Endothelial cell of umbilical vein (primary cell): ENCODE measurements at regions of chr21 and their contacts with region 1.

Region 1: GRCh38 chr21:42009831-42010523 is at the start of gene ZBTB21:
- DNase-seq: peak; percentile 98
- H3K4me3 ChIP-seq: peak within 1 kb of the TSS; percentile 47 to 70 (median 55)
- H3K27ac ChIP-seq: peak within 1 kb of the TSS; percentile 70
- H3K4me1 ChIP-seq: peaks cover 15% of the 10 kb centered on the region
- H3K27me3 ChIP-seq: peaks cover 3 to 14% of the 10 kb centered on the region in 2 experiments
- CTCF ChIP-seq: no peak
- POLR2A ChIP-seq: peak; percentile 80
- total RNA-seq, gene ZBTB21: 10.8 and 12.4 TPM in 2 replicates

Region 2: DNA sequence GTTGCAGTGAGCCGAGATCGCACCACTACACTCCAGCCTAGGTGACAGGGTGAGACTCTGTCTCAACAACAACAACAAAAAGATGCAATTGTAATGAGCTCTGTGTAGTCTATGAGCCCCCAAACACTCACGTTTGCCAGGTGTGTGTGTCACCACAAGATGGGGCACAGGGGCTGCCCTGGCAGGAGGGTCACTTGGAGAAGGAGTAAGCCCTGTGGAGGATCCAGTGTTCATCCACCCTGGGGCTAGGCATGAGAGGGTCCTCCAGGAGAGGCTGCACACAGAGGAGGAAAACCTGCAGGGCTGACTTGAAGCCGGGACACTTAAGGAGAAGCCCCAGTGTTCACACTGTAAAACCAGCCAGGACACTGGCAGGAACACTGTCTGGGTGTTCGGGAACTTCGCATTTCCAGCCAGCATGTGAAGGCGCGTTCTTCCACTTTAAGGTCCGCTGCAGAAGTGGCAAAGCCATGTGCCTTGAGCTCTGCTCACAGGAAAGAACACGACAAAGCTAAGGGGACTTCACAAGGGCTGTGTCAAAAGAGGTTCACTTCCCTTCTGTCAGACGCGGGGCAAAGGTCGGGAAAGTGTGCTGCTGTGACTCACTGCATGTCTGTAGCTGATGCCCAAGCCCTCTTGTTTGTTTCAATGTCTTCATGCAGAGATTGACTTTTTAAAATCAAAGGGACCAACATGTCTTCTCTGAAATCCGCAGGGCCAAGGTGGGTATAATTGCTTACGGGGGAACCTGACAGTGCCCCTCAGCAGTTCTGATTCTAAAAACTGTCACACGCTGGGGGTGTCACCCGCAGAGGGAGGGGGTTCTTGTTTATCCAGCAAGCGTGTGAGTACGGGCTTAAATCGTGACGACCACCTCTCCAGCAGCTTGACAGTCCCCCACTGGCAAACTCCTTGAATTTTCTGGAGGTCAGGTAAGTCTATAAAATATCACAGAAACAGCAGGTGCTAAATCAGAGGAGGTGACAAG is 345.9 kb before region 1 on chr21:
- CTCF ChIA-PET with region 1: no interaction called
- POLR2A ChIA-PET with region 1: no interaction called
- dilution Hi-C with region 1: no loop called
- intact Hi-C with region 1: no loop called
- DNase-seq: peak; percentile 6
- H3K4me3 ChIP-seq: no peak overlapping the region
- H3K27ac ChIP-seq: no peak overlapping the region
- H3K4me1 ChIP-seq: no peaks in the 10 kb centered on the region
- H3K27me3 ChIP-seq: peaks cover 0 to 2% of the 10 kb centered on the region in 2 experiments
- CTCF ChIP-seq: no peak
- POLR2A ChIP-seq: no peak

Region 3: GRCh38 chr21:41715649-41716281 is 294.2 kb before region 1 on chr21:
- CTCF ChIA-PET with region 1: no interaction called
- POLR2A ChIA-PET with region 1: no interaction called
- dilution Hi-C with region 1: no loop called
- intact Hi-C with region 1: no loop called
- DNase-seq: no peak
- H3K4me3 ChIP-seq: no peak overlapping the region
- H3K27ac ChIP-seq: no peak overlapping the region
- H3K4me1 ChIP-seq: no peaks in the 10 kb centered on the region
- H3K27me3 ChIP-seq: peaks cover 13 to 15% of the 10 kb centered on the region in 2 experiments
- CTCF ChIP-seq: no peak
- POLR2A ChIP-seq: no peak

Region 4: GRCh38 chr21:41832596-41833496 is 177.1 kb before region 1 on chr21:
- CTCF ChIA-PET with region 1: no interaction called
- POLR2A ChIA-PET with region 1: no interaction called
- dilution Hi-C with region 1: no loop called
- intact Hi-C with region 1: no loop called
- DNase-seq: no peak
- H3K4me3 ChIP-seq: no peak overlapping the region
- H3K27ac ChIP-seq: no peak overlapping the region
- H3K4me1 ChIP-seq: no peaks in the 10 kb centered on the region
- H3K27me3 ChIP-seq: no peaks in the 10 kb centered on the region
- CTCF ChIP-seq: no peak
- POLR2A ChIP-seq: no peak

Region 5: GRCh38 chr21:41879190-41879998 is 130.6 kb before region 1 on chr21 and contains the start of gene PRDM15:
- CTCF ChIA-PET with region 1: no interaction called
- POLR2A ChIA-PET with region 1: no interaction called
- dilution Hi-C with region 1: no loop called
- intact Hi-C with region 1: loop called (anchors 1 kb)
- DNase-seq: peak; percentile 46
- H3K4me3 ChIP-seq: peak within 1 kb of the TSS; percentile 57 to 94 (median 88)
- H3K27ac ChIP-seq: peak within 1 kb of the TSS; percentile 83
- H3K4me1 ChIP-seq: peaks cover 12% of the 10 kb centered on the region
- H3K27me3 ChIP-seq: no peaks in the 10 kb centered on the region
- CTCF ChIP-seq: no peak
- POLR2A ChIP-seq: peak; percentile 32
- total RNA-seq, gene PRDM15: 10.0 and 12.9 TPM in 2 replicates

Region 6: DNA sequence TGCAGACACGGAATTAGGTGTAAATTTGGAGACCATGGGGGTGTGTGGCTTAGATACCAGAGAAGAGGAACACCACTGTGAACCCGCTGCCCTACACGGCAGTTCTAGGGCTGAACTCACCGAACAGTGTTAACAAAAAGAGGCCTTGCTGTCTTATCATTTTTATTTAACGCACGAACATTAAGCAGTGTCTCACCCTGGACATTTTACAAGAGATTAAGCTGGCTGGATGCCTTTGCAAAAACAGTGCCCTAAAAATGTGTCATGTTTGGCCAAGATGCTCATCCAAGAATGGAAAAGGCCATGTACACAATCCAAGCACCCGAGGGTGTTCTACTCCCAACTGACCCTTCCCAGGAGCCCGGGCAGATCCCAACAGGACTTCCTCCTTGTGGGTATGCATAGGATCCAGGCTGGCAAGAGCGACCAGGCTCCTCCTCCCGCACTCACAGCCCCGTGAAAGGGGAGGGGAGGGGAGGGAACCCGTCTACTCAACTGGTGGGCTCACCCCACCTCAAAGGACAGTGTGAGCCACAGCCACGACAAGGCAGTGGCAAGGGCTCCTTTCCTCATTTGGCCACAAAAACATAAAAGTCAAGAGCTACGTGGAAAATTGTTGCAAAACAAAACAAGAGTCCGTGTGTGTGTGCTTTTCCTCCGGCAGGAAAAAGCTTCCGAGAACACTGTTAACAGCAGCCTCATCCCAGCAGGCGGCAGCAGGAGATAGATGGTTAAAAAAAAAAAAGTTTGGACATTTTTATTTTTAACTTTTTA is 76.5 kb before region 1 on chr21:
- CTCF ChIA-PET with region 1: interaction called, 8 read pairs
- POLR2A ChIA-PET with region 1: no interaction called
- dilution Hi-C with region 1: no loop called
- intact Hi-C with region 1: loop called (anchors 1 kb)
- DNase-seq: peak; percentile 78
- H3K4me3 ChIP-seq: peak overlapping the region in 2 of 3 experiments; percentile 15 to 49
- H3K27ac ChIP-seq: peak overlapping the region; percentile 80
- H3K4me1 ChIP-seq: peaks cover 26% of the 10 kb centered on the region
- H3K27me3 ChIP-seq: no peaks in the 10 kb centered on the region
- CTCF ChIP-seq: peak; percentile 38 to 44
- POLR2A ChIP-seq: no peak

Region 7: GRCh38 chr21:42097860-42098454 is 88.0 kb after region 1 on chr21:
- CTCF ChIA-PET with region 1: interaction called, 4 read pairs
- POLR2A ChIA-PET with region 1: no interaction called
- dilution Hi-C with region 1: no loop called
- intact Hi-C with region 1: loop called (anchors 1 kb)
- DNase-seq: peak; percentile 97
- H3K4me3 ChIP-seq: no peak overlapping the region
- H3K27ac ChIP-seq: peak overlapping the region; percentile 85
- H3K4me1 ChIP-seq: peaks cover 13% of the 10 kb centered on the region
- H3K27me3 ChIP-seq: peaks cover under 1 to 7% of the 10 kb centered on the region in 2 experiments
- CTCF ChIP-seq: no peak
- POLR2A ChIP-seq: no peak